ENCODE measurements at regions of chr6 and their contacts with region 1.

Region 1: DNA sequence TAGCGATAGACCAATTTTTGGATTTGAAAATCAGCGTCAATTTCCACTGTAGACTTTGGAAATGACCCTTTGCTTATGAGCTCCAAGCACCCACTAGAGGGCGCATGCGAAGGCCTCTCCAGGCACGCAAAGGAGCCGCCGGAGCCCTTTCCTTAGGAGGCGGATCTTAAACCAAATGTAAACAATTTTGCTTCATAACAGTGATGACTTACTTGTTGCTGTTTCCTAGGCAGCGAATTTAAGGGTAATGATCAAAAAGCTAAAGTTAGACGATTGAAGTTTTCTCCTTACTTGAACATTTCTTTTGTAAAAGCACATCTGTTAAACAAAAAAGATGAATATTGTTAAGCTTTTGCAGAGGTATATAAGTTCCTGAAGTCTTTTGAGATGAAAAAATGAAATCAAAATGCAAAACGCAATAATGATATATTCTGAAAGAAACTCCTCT is 29.2 kb upstream of the EXOC2 start:
- DNase-seq: peak; percentile 53 to 88 (median 76)
- ATAC-seq: peak; percentile 92 to 98 (median 96)
- H3K4me3 ChIP-seq: no peak overlapping the region
- H3K27ac ChIP-seq: no peak overlapping the region
- H3K4me1 ChIP-seq: peaks cover 0 to 4% (median 0%) of the 10 kb centered on the region in 3 donors
- H3K27me3 ChIP-seq: peaks cover 0 to 5% (median 2%) of the 10 kb centered on the region in 4 donors
- CTCF ChIP-seq: peak; percentile 64 to 84 (median 77)

Region 2: DNA sequence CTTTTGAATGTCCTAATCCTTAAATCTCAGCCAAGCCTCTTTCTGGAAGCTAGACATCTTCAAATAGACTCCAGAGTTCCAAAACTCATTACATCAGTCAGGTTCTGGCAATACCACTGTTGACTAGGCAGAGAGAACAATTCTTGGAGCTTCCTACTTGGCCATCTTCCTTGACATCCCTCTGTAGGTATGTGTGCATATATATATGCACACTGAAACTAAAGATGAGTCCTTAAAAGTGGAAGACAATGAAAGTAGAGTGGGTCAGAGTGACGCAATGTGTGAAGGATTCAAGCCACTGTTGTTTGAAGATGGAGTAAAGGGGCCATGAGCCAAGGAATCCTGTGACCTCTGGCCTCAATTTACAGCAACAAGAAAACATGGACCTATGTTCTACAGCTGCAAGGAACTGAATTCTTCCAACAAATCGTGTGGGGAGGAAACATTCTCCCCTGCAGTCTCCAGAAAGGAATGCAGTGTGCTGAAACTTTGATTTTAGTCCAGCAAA is 448.5 kb before region 1 on chr6:
- intact Hi-C with region 1: no loop called
- DNase-seq: no peak
- ATAC-seq: peak in 2 of 4 donors; percentile 22 to 72
- H3K4me3 ChIP-seq: no peak overlapping the region
- H3K27ac ChIP-seq: no peak overlapping the region
- H3K4me1 ChIP-seq: no peaks in the 10 kb centered on the region
- H3K27me3 ChIP-seq: no peaks in the 10 kb centered on the region
- CTCF ChIP-seq: no peak

Region 3: GRCh38 chr6:490251-491037 is 231.7 kb before region 1 on chr6:
- intact Hi-C with region 1: no loop called
- DNase-seq: no peak
- ATAC-seq: no peak
- H3K4me3 ChIP-seq: no peak overlapping the region
- H3K27ac ChIP-seq: no peak overlapping the region
- H3K4me1 ChIP-seq: no peaks in the 10 kb centered on the region
- H3K27me3 ChIP-seq: no peaks in the 10 kb centered on the region
- CTCF ChIP-seq: no peak

Region 4: DNA sequence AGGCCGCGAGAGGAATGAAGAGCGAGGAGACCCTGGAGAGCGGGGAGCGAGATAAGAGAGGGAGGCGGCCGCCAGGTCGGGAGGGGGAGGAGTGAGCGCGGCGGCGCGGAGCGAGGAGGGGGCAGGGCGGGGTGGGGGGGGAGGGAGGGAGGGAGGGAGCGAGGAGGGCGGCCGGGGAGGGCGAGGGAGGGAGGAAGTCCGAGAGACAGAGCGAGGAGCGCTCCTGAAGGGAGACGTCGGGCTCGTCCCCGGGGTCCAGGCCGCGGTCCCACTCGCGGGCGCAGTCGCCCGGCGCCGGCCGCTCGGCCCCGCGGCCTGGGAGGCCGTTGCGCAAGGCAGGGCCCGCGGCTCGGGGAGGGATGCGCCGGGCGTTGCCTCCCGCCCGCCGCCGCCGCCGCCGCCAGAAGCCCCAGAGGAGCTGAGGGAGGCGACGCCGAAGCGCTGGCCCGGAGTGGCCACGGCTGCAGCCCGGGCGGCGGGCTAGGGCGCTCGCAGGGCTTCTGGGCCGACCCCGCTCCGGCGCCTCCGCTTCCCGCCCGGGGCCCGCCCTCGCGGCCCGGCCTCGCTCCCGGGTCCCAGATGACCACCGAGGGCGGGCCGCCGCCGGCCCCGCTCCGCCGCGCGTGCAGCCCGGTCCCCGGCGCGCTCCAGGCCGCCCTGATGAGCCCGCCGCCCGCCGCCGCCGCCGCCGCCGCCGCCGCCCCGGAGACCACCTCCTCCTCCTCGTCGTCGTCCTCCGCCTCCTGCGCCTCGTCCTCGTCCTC is 667.5 kb after region 1 on chr6 and contains the start of gene FOXF2:
- intact Hi-C with region 1: loop called in 1 of 3 experiments (anchors 5 kb)
- DNase-seq: no peak
- ATAC-seq: peak in 2 of 4 donors; percentile 18 to 26
- H3K4me3 ChIP-seq: peak within 1 kb of the TSS in 3 of 4 donors; percentile 5 to 39 (median 27)
- H3K27ac ChIP-seq: no peak within 1 kb of the TSS
- H3K4me1 ChIP-seq: peaks cover 0 to 4% (median 0%) of the 10 kb centered on the region in 3 donors
- H3K27me3 ChIP-seq: peaks cover 0 to 26% (median 15%) of the 10 kb centered on the region in 4 donors
- CTCF ChIP-seq: no peak
- total RNA-seq, gene FOXF2: 0.12 to 0.90 (median 0.35) TPM

Measured in pancreas (tissue), 10 donors.